RWPE1 (cell line): ENCODE measurements at regions of chr17 and their contacts with region 1.

Region 1: GRCh38 chr17:78360371-78361224 is 721 bp upstream of the SOCS3 start:
- DNase-seq: peak; percentile 91
- H3K27ac ChIP-seq: peak overlapping the region; percentile 80
- CTCF ChIP-seq: peak; percentile 96

Region 2: DNA sequence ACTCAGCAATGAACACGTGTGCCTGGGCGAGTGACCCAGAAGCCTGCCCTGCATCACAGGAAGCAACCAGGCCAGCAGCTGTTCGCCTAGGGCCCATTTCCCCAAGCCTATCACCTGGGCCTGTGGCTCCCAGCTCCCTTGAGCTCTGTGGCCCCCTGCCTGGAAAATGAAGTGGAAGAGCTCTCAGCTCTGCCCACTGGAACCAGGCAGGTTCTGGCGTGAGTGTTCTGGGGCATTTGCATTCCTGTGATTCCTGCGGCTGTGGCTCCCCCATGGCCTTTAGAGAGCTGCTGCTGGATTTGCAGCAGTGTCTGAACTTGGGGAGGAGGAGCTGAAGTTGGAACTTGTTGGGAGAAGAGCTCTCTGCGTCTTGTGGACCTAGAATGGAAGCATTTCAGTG is 40.6 kb after region 1 on chr17:
- CTCF ChIA-PET with region 1: interaction called, 13 read pairs
- POLR2A ChIA-PET with region 1: no interaction called
- DNase-seq: peak; percentile 79
- H3K27ac ChIP-seq: peak overlapping the region; percentile 73
- CTCF ChIP-seq: no peak